A673 (cell line): ENCODE measurements at regions of chr16 and their contacts with region 1.

Region 1: GRCh38 chr16:15765880-15766279 is 90.9 kb downstream of the MYH11 start:
- DNase-seq: peak; percentile 78
- H3K4me3 ChIP-seq: no peak overlapping the region
- H3K27ac ChIP-seq: no peak overlapping the region
- H3K4me1 ChIP-seq: no peaks in the 10 kb centered on the region
- H3K27me3 ChIP-seq: peaks cover 5% of the 10 kb centered on the region
- CTCF ChIP-seq: peak; percentile 79

Region 2: GRCh38 chr16:15822957-15823356 is 57.1 kb after region 1 on chr16:
- CTCF ChIA-PET with region 1: interaction called, 6 read pairs
- POLR2A ChIA-PET with region 1: no interaction called
- intact Hi-C with region 1: loop called (anchors 5 kb)
- DNase-seq: no peak
- H3K4me3 ChIP-seq: no peak overlapping the region
- H3K27ac ChIP-seq: no peak overlapping the region
- H3K4me1 ChIP-seq: no peaks in the 10 kb centered on the region
- H3K27me3 ChIP-seq: no peaks in the 10 kb centered on the region
- CTCF ChIP-seq: no peak

Region 3: DNA sequence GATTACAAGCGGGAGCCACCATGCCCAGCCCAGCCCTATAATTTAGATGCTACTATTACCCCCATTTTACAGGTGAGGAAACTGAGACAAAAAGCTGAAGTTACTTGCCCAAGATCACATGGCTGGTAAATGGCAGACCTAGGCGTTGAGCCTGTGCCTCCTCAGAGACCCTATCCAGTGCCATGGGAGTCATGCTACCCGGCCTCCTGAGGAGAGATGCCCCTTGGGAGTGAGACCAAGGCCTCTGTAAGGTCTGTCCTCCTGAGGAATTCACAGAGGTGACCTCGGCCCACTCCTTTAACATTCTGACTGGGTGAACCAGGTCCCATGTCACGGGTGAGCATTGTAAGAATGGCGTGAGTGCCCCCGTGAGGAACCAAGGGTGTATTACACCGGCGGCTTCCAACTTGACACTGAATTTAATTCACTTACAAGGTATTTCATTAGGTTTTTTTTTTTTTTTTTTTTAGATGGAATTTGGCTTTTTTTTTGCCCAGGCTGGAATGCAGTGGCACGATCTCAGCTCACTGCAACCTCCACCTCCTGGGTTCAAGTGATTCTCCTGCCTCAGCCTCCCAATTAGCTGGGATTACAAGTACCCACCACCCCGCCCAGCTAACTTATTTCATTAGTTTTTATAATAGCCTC is 361.7 kb after region 1 on chr16:
- CTCF ChIA-PET with region 1: no interaction called
- POLR2A ChIA-PET with region 1: no interaction called
- intact Hi-C with region 1: loop called (anchors 1 kb)
- DNase-seq: peak; percentile 73
- H3K4me3 ChIP-seq: no peak overlapping the region
- H3K27ac ChIP-seq: no peak overlapping the region
- H3K4me1 ChIP-seq: no peaks in the 10 kb centered on the region
- H3K27me3 ChIP-seq: no peaks in the 10 kb centered on the region
- CTCF ChIP-seq: peak; percentile 88

Region 4: DNA sequence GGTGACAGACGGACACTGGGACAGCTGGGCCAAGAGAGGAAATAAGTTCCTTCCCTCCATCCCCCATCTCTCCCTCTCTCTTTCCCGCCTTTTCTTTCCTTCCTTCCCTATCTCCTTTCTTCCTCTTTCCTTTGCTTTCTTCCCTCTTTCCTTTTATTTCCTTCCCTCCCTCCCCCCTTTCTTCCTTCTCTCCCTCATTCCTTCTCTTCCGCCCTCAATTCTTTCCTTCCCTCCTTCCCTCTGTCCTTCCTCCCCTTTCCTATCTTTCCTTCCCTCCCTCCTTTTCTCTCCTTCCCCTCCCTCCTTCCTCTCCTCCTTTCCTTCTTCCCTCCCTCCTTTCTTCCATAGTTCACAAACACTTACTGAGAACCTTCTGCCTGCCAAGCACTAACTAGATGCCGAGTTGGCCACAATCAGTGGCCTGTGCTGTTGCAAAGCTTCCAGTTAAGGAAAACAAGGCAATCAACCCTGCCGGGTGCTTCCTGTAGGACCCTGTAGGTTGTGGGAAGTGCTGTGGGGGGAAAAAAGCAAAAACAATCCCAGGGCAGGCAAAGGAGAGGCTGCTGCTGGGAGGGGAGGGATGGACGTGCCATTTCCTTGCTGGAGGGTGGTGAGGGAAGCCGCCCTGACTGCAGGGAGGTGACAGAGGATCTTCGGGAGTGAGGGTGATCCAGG is 425.8 kb after region 1 on chr16:
- CTCF ChIA-PET with region 1: no interaction called
- POLR2A ChIA-PET with region 1: no interaction called
- intact Hi-C with region 1: loop called (anchors 10 kb)
- DNase-seq: no peak
- H3K4me3 ChIP-seq: no peak overlapping the region
- H3K27ac ChIP-seq: no peak overlapping the region
- H3K4me1 ChIP-seq: no peaks in the 10 kb centered on the region
- H3K27me3 ChIP-seq: no peaks in the 10 kb centered on the region
- CTCF ChIP-seq: no peak